Ovary (tissue), 10 donors: ENCODE measurements at regions of chr5 and their contacts with region 1.

Region 1: GRCh38 chr5:126166368-126166767 is 256.8 kb upstream of the GRAMD2B start:
- DNase-seq: no peak
- H3K4me3 ChIP-seq: no peak overlapping the region
- H3K27ac ChIP-seq: no peak overlapping the region
- H3K4me1 ChIP-seq: no peaks in the 10 kb centered on the region
- H3K27me3 ChIP-seq: no peaks in the 10 kb centered on the region
- CTCF ChIP-seq: no peak
- EP300 ChIP-seq: no peak
- POLR2A ChIP-seq: no peak

Region 2: GRCh38 chr5:125685771-125686170 is 480.6 kb before region 1 on chr5:
- intact Hi-C with region 1: no loop called
- DNase-seq: no peak
- H3K4me3 ChIP-seq: no peak overlapping the region
- H3K27ac ChIP-seq: no peak overlapping the region
- H3K4me1 ChIP-seq: no peaks in the 10 kb centered on the region
- H3K27me3 ChIP-seq: peaks cover 2% of the 10 kb centered on the region
- CTCF ChIP-seq: no peak
- EP300 ChIP-seq: no peak
- POLR2A ChIP-seq: no peak

Region 3: DNA sequence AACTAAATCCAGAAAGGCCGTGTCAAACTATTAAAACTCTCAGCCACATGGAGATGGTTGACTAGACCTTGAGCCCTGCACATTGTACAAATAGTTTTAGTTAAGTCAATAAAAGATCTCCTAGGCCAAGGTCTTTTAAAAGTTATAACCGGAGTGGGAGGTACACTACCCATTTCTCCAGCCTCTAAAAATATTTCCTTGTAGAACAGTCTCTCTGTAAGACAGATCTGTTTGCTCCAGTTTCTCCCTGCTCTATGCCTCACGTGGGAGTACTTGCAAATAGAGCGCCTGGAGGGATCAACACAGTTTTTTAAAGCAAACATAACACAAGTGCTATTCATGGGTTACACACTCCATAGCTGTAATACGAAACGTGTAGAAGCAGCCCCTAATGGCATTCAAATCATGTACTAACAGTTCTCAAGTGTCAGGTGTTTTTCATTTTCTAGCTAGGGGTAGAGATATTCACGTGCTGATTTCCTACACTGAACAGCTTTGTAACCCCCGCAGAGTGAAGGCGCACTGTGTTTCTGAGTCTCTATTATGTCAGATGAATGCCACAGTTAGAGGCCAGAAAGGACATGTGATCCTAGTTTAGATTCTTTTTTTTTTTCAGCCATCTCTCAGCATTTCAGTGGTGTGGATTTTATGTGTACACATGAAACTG is 446.6 kb before region 1 on chr5:
- intact Hi-C with region 1: loop called in 1 of 4 experiments (anchors 10 kb)
- DNase-seq: no peak
- H3K4me3 ChIP-seq: no peak overlapping the region
- H3K27ac ChIP-seq: no peak overlapping the region
- H3K4me1 ChIP-seq: no peaks in the 10 kb centered on the region
- H3K27me3 ChIP-seq: no peaks in the 10 kb centered on the region
- CTCF ChIP-seq: no peak
- EP300 ChIP-seq: no peak
- POLR2A ChIP-seq: no peak